Activated B cell treated with CpG ODN at 0.5 μM for 24 hours (primary cell): ENCODE measurements at regions of chr5 and their contacts with region 1.

Region 1: DNA sequence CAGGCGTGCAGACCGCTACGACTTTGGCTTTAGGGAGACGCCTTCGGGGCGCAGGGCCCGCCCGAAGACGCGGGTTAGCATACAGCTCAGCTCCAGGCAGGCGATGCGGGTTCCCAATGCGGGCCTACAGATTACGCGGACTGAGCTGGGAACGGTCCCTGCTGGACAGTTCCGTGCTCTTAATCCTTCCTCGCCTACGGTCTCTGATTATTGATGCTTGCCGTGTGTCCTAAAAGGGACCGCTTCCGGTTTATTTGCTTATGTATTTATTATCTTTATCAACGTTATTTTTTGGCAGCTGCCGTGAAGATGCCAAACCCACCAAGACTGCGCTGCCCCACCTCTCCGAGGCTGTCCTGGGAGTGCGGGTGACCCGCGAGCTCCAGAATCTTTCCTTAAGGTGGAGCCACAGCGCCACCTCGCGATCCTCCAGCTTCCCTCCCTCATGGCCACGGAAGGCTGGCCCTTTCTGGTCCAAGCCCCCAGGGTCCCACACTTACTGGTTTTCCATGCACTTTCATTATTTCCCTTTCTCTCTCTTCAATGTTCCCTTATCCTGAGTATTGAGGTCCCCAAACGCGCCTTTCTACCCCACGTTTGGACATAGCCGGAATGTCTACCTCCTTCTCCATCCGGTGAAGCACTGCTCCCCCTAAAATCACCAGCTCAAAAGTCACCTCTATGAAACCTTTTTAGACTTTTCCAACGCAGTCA is 7.0 kb upstream of the EBF1 start:
- DNase-seq: peak; percentile 79
- ATAC-seq: peak; percentile 71
- H3K4me3 Mint-ChIP-seq: peak overlapping the region; percentile 86
- H3K27ac Mint-ChIP-seq: peak overlapping the region; percentile 95
- H3K4me1 Mint-ChIP-seq: peaks cover 53% of the 10 kb centered on the region
- H3K27me3 Mint-ChIP-seq: no peaks in the 10 kb centered on the region
- CTCF ChIP-seq: peak; percentile 69

Region 2: DNA sequence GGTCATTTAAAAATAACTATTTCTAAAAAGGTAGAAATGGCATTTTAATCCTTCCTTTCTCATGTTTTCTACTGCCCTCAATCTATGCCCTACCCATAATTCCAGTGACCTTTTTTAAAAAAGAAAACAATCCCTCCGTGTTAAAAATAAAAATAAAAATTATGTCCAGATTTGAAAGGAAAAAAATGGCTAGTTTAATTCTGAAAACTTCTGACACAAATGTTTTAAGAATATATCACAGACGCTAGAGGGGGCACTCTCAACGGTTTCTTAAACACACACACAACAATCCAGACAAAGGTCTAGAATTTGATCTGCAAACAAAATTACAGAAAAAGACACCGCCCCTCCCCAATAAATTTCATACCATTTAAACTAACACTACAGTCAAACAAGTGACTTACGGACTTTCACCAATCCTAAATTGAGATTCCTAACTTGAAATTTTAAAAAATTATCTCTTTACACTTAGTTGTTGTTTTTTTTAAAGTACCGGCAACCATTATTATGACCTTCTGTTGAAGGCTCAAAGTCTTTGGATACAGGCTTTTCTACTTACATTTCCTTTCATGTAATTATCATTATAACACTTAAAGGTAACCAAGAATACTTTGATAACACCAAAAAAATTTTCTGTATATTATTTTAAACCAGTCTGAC is 1286.0 kb before region 1 on chr5:
- CTCF ChIA-PET with region 1: interaction called, 8 read pairs
- POLR2A ChIA-PET with region 1: interaction called, 3 read pairs
- intact Hi-C with region 1: loop called (anchors 1 kb)
- DNase-seq: no peak
- ATAC-seq: no peak
- H3K4me3 Mint-ChIP-seq: no peak overlapping the region
- H3K27ac Mint-ChIP-seq: peak overlapping the region; percentile 12
- H3K4me1 Mint-ChIP-seq: peaks cover 25% of the 10 kb centered on the region
- H3K27me3 Mint-ChIP-seq: no peaks in the 10 kb centered on the region
- CTCF ChIP-seq: no peak

Region 3: GRCh38 chr5:158170060-158170459 is 936.7 kb before region 1 on chr5:
- CTCF ChIA-PET with region 1: interaction called, 112 read pairs
- POLR2A ChIA-PET with region 1: interaction called, 20 read pairs
- intact Hi-C with region 1: no loop called
- DNase-seq: no peak
- ATAC-seq: no peak
- H3K4me3 Mint-ChIP-seq: no peak overlapping the region
- H3K27ac Mint-ChIP-seq: no peak overlapping the region
- H3K4me1 Mint-ChIP-seq: peaks cover 29% of the 10 kb centered on the region
- H3K27me3 Mint-ChIP-seq: no peaks in the 10 kb centered on the region
- CTCF ChIP-seq: no peak

Region 4: DNA sequence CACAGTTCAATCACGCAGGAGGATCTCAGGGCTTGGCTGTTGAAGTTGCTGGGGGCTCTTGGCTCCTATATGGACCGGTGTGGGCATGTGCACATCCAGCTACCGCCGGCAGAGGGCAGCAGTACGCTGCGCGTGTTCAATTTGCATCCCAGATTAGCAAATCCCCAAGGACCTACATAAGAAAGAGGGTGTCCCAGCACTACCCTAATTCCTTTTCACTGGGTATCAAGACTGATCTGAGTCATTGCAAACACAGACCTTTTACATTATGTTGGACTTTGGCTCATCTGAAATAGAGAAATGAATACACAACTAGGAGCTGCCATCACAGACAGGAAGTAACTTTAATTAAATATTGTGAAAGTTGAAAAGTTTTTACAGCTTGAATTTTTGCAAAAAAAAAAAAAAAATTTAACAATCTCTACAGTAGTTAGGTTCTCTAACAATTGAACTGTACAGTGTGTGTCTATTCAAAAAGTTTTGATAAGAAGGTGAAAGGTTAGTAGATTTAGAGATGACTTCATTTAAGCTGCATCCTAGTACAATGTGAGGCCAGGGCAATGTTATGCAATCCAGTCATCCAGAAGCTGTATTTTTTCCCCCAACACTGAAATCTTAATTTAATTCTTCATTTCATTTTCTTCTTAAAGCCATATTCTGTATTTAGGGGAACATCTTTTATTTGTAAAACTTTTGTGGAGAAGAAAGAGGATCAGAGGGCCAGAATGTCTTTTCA is 411.0 kb before region 1 on chr5:
- CTCF ChIA-PET with region 1: interaction called, 231 read pairs
- POLR2A ChIA-PET with region 1: interaction called, 97 read pairs
- intact Hi-C with region 1: loop called (anchors 1 kb)
- DNase-seq: peak; percentile 76
- ATAC-seq: peak; percentile 96
- H3K4me3 Mint-ChIP-seq: no peak overlapping the region
- H3K27ac Mint-ChIP-seq: peak overlapping the region; percentile 73
- H3K4me1 Mint-ChIP-seq: peaks cover 26% of the 10 kb centered on the region
- H3K27me3 Mint-ChIP-seq: no peaks in the 10 kb centered on the region
- CTCF ChIP-seq: peak; percentile 92

Region 5: GRCh38 chr5:158880483-158881001 is 226.2 kb before region 1 on chr5:
- CTCF ChIA-PET with region 1: interaction called, 19 read pairs
- POLR2A ChIA-PET with region 1: interaction called, 63 read pairs
- intact Hi-C with region 1: loop called (anchors 1 kb)
- DNase-seq: no peak
- ATAC-seq: peak; percentile 28
- H3K4me3 Mint-ChIP-seq: peak overlapping the region; percentile 70
- H3K27ac Mint-ChIP-seq: peak overlapping the region; percentile 88
- H3K4me1 Mint-ChIP-seq: peaks cover 95% of the 10 kb centered on the region
- H3K27me3 Mint-ChIP-seq: no peaks in the 10 kb centered on the region
- CTCF ChIP-seq: no peak

Region 6: DNA sequence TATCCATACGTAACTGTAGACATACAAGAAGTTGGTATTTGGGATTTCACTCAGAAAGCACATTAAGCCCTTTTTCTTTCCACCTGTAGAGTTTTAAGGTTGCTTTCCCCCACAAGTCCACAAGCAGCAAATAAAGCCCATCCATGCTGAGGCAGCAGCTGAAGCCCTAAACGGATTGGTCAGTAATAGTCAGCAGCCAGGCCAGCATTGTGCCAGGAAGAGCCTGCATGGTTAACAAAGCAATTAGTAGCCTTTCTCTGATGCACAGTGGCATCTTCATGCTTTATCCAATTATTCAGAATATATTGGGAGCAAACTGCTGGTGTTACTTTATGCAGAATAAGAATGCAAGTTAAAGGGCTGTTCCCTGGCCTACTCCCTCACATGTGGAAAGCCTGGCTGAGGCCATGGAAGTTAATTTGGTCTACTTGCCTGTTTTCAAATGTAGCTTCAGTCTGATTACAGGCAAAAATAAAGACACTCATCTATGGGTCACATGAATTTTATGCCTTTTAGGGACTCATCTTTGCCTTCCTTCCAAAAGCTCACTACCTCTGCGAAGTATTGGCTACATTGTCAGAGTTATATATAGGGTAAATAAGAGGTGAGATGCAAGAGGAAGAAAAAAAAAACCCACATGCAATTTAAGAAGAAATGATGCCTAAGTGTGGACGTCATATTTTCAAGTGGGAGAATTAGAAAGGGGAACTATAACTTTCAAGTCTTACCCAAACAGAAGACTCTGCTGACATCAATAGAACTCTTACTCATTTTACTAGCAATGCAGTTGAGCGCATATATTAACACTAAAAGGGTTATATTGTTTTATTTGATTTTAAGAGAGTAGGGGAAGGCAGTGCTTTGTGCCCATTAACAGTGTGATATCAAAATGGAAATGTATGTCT is 22.9 kb before region 1 on chr5:
- CTCF ChIA-PET with region 1: interaction called, 3 read pairs
- POLR2A ChIA-PET with region 1: interaction called, 150 read pairs
- intact Hi-C with region 1: loop called (anchors 1 kb)
- DNase-seq: no peak
- ATAC-seq: peak; percentile 93
- H3K4me3 Mint-ChIP-seq: peak overlapping the region; percentile 72
- H3K27ac Mint-ChIP-seq: peak overlapping the region; percentile 93
- H3K4me1 Mint-ChIP-seq: peaks cover 70% of the 10 kb centered on the region
- H3K27me3 Mint-ChIP-seq: no peaks in the 10 kb centered on the region
- CTCF ChIP-seq: no peak

Region 7: GRCh38 chr5:159510282-159510681 is 403.6 kb after region 1 on chr5:
- CTCF ChIA-PET with region 1: no interaction called
- POLR2A ChIA-PET with region 1: no interaction called
- intact Hi-C with region 1: no loop called
- DNase-seq: no peak
- ATAC-seq: no peak
- H3K4me3 Mint-ChIP-seq: no peak overlapping the region
- H3K27ac Mint-ChIP-seq: no peak overlapping the region
- H3K4me1 Mint-ChIP-seq: peaks cover 2% of the 10 kb centered on the region
- H3K27me3 Mint-ChIP-seq: no peaks in the 10 kb centered on the region
- CTCF ChIP-seq: no peak